ENCODE measurements at regions of chr19 and their contacts with region 1.

Region 1: GRCh38 chr19:9009935-9010651 is at the start of gene MUC16:
- DNase-seq: no peak
- H3K4me3 ChIP-seq: no peak within 1 kb of the TSS
- H3K27ac ChIP-seq: no peak within 1 kb of the TSS
- H3K4me1 ChIP-seq: no peaks in the 10 kb centered on the region
- H3K27me3 ChIP-seq: no peaks in the 10 kb centered on the region
- CTCF ChIP-seq: no peak
- EP300 ChIP-seq: no peak
- POLR2A ChIP-seq: no peak
- total RNA-seq, gene MUC16: 0.13 to 52.8 (median 4.0) TPM

Region 2: GRCh38 chr19:8973501-8974091 is 36.5 kb before region 1 on chr19:
- intact Hi-C with region 1: loop called in 1 of 4 experiments (anchors 1 kb)
- DNase-seq: no peak
- H3K4me3 ChIP-seq: no peak overlapping the region
- H3K27ac ChIP-seq: no peak overlapping the region
- H3K4me1 ChIP-seq: no peaks in the 10 kb centered on the region
- H3K27me3 ChIP-seq: no peaks in the 10 kb centered on the region
- CTCF ChIP-seq: no peak
- EP300 ChIP-seq: no peak
- POLR2A ChIP-seq: no peak